CD4-positive, alpha-beta T cell (primary cell): ENCODE measurements at regions of chr7 and their contacts with region 1.

Region 1: DNA sequence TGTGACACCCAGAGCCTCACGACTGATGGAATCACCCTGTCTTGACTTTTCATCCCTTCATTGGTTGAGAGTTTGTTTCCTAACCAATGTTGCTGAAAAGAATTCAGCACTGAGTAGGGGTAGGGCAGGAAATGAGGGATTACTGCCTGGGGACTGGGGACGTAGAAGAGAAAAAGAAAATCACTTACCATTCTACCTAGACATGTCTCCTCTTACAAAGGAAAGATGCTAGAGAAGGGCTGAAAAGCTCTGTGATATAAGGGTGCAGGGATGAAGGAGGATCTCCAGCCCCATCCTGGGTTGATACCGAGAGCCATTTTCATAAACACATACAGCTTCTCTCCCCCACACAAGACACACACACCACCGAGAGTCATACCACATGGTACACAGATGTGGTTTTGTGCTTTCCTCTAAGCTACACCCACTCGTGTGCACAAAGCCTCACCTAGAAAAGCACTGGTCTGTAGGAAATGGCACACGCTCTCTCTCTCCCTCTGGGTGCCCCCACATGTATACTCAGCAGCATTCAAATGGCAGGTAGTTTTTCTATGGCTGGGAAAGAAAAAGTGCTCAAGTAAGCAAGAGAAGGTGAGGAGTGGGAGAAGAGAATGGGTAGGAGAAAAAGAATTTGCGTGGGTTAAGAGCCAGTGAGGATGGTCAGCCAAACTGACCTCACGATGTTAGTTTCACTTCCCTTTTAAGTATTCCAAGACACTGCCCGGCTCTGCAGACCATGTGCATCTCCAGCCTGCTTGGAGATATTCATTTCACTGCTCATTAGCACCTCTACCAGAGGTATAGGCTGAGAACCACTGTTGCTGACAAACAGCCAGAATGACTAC is 85.8 kb downstream of the CALD1 start:
- DNase-seq: peak in 12 of 14 experiments; percentile 4 to 68 (median 29)
- ATAC-seq: peak; percentile 86
- H3K4me3 ChIP-seq: peak overlapping the region; percentile 46
- H3K4me3 Mint-ChIP-seq: peak overlapping the region; percentile 63
- H3K27ac ChIP-seq: peak overlapping the region; percentile 33 to 61
- H3K27ac Mint-ChIP-seq: peak overlapping the region; percentile 90
- H3K4me1 ChIP-seq: peaks cover 21% of the 10 kb centered on the region
- H3K4me1 Mint-ChIP-seq: peaks cover 50% of the 10 kb centered on the region
- H3K27me3 ChIP-seq: no peaks in the 10 kb centered on the region
- H3K27me3 Mint-ChIP-seq: no peaks in the 10 kb centered on the region
- CTCF ChIP-seq: no peak

Region 2: DNA sequence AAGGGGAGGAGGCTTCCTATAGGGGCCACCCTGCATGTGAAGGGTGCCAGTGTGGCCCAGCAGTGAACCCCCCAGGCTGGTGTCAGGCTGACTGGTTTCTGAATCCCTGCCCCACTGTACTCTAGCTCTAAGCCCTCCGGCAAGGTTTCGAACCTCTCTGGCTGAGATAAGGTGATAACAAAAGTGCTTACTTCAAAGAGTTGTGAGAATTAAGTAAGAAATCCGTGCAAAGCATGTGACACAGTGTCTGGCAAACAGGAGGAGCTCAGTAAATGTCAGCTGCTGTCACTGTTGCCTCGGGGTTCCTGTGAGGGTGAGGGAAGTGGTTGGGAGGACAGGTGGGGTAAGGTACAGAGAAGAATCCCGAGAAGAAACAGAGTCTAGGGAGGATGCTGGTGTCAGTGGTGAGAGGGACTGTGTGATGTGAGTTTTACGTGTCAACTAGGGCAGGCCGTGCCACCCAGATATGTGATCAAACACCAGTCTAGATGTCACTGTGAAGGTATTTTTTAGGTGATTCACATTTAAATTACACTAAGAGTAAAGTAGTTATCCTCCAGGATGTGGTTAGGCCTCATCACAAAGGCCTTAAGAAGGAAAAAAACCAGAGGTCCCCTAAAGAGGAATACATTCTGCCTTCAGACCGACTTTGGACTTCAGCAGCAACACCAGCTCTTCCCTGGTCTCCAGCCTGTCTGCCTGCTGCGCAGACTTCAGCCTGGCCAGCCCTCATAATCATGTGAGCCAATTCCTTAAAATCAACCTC is 154.2 kb before region 1 on chr7:
- CTCF ChIA-PET with region 1: no interaction called
- POLR2A ChIA-PET with region 1: no interaction called
- intact Hi-C with region 1: loop called in 1 of 2 experiments (anchors 2 kb)
- DNase-seq: peak; percentile 31 to 88 (median 61)
- ATAC-seq: peak; percentile 94
- H3K4me3 ChIP-seq: no peak overlapping the region
- H3K4me3 Mint-ChIP-seq: peak overlapping the region; percentile 25
- H3K27ac ChIP-seq: peak overlapping the region; percentile 68 to 73
- H3K27ac Mint-ChIP-seq: peak overlapping the region; percentile 84
- H3K4me1 ChIP-seq: peaks cover 13% of the 10 kb centered on the region
- H3K4me1 Mint-ChIP-seq: peaks cover 18% of the 10 kb centered on the region
- H3K27me3 ChIP-seq: no peaks in the 10 kb centered on the region
- H3K27me3 Mint-ChIP-seq: no peaks in the 10 kb centered on the region
- CTCF ChIP-seq: no peak

Region 3: GRCh38 chr7:135238112-135238744 is 373.0 kb after region 1 on chr7:
- CTCF ChIA-PET with region 1: no interaction called
- POLR2A ChIA-PET with region 1: no interaction called
- intact Hi-C with region 1: no loop called
- DNase-seq: peak in 3 of 14 experiments; percentile 8 to 34 (median 8)
- ATAC-seq: no peak
- H3K4me3 ChIP-seq: no peak overlapping the region
- H3K4me3 Mint-ChIP-seq: no peak overlapping the region
- H3K27ac ChIP-seq: no peak overlapping the region
- H3K27ac Mint-ChIP-seq: no peak overlapping the region
- H3K4me1 ChIP-seq: no peaks in the 10 kb centered on the region
- H3K4me1 Mint-ChIP-seq: no peaks in the 10 kb centered on the region
- H3K27me3 ChIP-seq: no peaks in the 10 kb centered on the region
- H3K27me3 Mint-ChIP-seq: no peaks in the 10 kb centered on the region
- CTCF ChIP-seq: no peak

Region 4: GRCh38 chr7:135856356-135857144 is 991.3 kb after region 1 on chr7:
- CTCF ChIA-PET with region 1: no interaction called
- POLR2A ChIA-PET with region 1: no interaction called
- intact Hi-C with region 1: no loop called
- DNase-seq: no peak
- ATAC-seq: no peak
- H3K4me3 ChIP-seq: no peak overlapping the region
- H3K4me3 Mint-ChIP-seq: no peak overlapping the region
- H3K27ac ChIP-seq: no peak overlapping the region
- H3K27ac Mint-ChIP-seq: no peak overlapping the region
- H3K4me1 ChIP-seq: peaks cover 5% of the 10 kb centered on the region
- H3K4me1 Mint-ChIP-seq: no peaks in the 10 kb centered on the region
- H3K27me3 ChIP-seq: peaks cover 0 to 4% of the 10 kb centered on the region in 2 experiments
- H3K27me3 Mint-ChIP-seq: peaks cover 12% of the 10 kb centered on the region
- CTCF ChIP-seq: no peak